Ascending aorta (tissue), 2 donors: ENCODE measurements at regions of chr3 and their contacts with region 1.

Region 1: DNA sequence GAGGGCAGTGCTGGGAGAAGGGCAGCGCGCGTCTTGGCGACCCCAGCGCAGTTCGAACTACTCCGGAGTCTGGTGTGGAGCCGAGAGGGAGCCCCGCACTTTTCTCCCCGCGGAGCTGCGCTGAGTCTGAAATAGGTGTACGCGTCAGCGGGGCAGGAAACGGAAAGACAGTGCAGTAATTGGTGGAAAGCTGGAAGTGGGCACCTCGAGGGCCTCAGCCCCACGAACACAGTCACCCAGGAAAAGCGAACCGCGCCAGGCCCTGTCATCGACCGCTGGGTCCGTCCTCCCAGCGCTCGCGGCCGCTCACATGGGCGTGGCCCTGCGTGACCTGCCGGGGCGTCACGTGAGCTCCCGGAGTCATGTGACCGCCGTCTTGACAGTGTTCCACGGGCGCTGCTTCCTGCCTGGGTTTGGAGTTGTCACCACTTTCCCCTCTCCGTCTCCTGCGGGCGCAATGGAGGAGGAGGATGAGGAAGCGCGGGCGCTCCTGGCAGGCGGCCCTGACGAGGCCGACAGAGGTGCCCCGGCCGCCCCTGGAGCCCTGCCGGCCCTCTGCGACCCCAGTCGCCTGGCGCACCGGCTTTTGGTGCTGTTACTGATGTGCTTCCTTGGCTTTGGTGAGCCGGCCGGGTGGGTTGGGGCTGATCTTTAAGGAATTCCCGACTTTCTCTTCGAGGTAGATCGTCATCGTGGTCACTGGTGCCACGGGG is at the start of gene MFSD1:
- DNase-seq: peak; percentile 88 to 98
- H3K4me3 ChIP-seq: peak within 1 kb of the TSS; percentile 77 to 95
- H3K27ac ChIP-seq: peak within 1 kb of the TSS; percentile 71 to 89
- H3K4me1 ChIP-seq: peaks cover 3 to 9% of the 10 kb centered on the region in 2 donors
- H3K27me3 ChIP-seq: no peaks in the 10 kb centered on the region
- CTCF ChIP-seq: no peak
- total RNA-seq, gene MFSD1: 35.9 TPM

Region 2: GRCh38 chr3:158644345-158644908 is 157.4 kb before region 1 on chr3 and contains the start of gene GFM1:
- intact Hi-C with region 1: loop called (anchors 1 kb)
- DNase-seq: peak; percentile 64 to 97
- H3K4me3 ChIP-seq: peak within 1 kb of the TSS; percentile 67 to 80
- H3K27ac ChIP-seq: peak within 1 kb of the TSS; percentile 75 to 94
- H3K4me1 ChIP-seq: peaks cover 0 to 11% of the 10 kb centered on the region in 2 donors
- H3K27me3 ChIP-seq: no peaks in the 10 kb centered on the region
- CTCF ChIP-seq: peak; percentile 65 to 95 (median 92)
- total RNA-seq, gene GFM1: 13.9 TPM

Region 3: GRCh38 chr3:158671821-158672220 is 130.0 kb before region 1 on chr3:
- intact Hi-C with region 1: no loop called
- DNase-seq: no peak
- H3K4me3 ChIP-seq: peak overlapping the region; percentile 49 to 67
- H3K27ac ChIP-seq: peak overlapping the region; percentile 32 to 74
- H3K4me1 ChIP-seq: no peaks in the 10 kb centered on the region
- H3K27me3 ChIP-seq: no peaks in the 10 kb centered on the region
- CTCF ChIP-seq: no peak

Region 4: GRCh38 chr3:158790901-158791589 is 10.8 kb before region 1 on chr3:
- intact Hi-C with region 1: no loop called
- DNase-seq: no peak
- H3K4me3 ChIP-seq: peak overlapping the region; percentile 15 to 42
- H3K27ac ChIP-seq: no peak overlapping the region
- H3K4me1 ChIP-seq: no peaks in the 10 kb centered on the region
- H3K27me3 ChIP-seq: no peaks in the 10 kb centered on the region
- CTCF ChIP-seq: peak; percentile 67 to 87 (median 78)

Region 5: DNA sequence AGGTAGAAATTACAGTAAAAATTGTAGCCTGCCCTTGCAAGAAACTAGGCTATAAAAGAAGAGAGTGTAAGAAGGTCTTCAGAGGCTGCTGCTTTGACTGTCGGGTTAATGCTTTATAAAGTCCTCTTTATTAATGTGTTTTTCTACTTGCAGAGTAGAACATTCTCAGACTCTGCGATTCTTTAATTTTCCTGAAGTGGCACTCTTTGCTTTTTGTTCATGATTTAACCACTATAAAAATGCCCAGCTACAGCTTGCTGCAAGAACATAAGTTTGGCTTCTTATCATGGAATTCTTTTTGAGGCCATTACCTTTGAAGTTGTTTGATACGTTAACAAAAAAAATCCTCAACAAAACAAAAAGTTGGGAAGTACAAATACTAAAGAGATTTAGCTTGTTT is 33.8 kb after region 1 on chr3:
- intact Hi-C with region 1: no loop called
- DNase-seq: no peak
- H3K4me3 ChIP-seq: no peak overlapping the region
- H3K27ac ChIP-seq: no peak overlapping the region
- H3K4me1 ChIP-seq: no peaks in the 10 kb centered on the region
- H3K27me3 ChIP-seq: no peaks in the 10 kb centered on the region
- CTCF ChIP-seq: no peak

Region 6: DNA sequence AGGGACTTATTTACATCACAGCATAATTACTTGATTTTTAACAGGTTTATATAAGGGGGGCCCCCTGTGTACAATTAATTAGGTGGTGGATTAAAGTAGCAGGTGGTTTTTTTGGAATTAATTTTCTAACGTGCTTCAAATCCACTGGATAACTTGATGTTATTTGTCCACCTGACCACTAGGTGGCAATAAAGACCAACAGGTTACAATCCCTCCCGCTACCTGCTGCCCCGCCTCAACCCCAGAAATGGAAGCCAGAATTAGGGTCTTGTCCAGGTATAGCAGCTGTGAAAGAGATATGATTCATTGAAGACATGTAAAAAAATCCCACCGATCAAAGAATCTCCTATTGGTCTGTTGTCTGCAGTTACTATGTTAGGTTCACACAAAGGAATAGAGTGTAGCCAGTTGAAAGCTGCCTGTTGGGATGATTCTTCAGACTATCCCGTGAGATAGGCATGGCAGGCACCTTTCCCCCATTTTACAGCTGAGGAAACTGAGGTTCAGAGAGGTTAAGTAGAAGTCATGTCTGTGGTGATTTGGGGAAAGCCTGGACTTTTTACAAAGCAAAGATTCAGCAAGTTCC is 44.0 kb after region 1 on chr3:
- intact Hi-C with region 1: no loop called
- DNase-seq: no peak
- H3K4me3 ChIP-seq: no peak overlapping the region
- H3K27ac ChIP-seq: no peak overlapping the region
- H3K4me1 ChIP-seq: no peaks in the 10 kb centered on the region
- H3K27me3 ChIP-seq: no peaks in the 10 kb centered on the region
- CTCF ChIP-seq: peak; percentile 35 to 56 (median 39)